A673 (cell line): ENCODE measurements at regions of chr12 and their contacts with region 1.

Region 1: DNA sequence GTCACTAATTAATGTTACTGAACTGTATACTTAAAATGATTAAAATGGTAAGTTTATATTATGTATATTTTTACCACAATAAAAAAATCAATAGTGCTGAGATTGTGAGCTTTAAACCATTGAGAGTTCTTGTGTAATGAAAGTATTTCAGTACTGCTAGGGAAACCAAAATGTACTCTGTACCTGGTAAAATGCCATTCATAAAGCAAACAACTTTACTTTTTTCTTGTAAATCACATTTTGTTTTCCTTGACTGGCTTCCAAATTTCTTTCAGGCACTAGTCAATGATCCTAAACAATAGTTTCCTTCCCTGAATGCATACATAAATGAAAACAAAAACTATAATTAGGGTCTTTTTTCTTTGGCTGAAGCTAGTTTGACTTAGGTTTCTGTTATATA is 29.4 kb upstream of the SNRPF start:
- DNase-seq: no peak
- H3K4me3 ChIP-seq: peak overlapping the region; percentile 50
- H3K27ac ChIP-seq: peak overlapping the region; percentile 89
- H3K4me1 ChIP-seq: peaks cover 30% of the 10 kb centered on the region
- H3K27me3 ChIP-seq: no peaks in the 10 kb centered on the region
- CTCF ChIP-seq: no peak

Region 2: DNA sequence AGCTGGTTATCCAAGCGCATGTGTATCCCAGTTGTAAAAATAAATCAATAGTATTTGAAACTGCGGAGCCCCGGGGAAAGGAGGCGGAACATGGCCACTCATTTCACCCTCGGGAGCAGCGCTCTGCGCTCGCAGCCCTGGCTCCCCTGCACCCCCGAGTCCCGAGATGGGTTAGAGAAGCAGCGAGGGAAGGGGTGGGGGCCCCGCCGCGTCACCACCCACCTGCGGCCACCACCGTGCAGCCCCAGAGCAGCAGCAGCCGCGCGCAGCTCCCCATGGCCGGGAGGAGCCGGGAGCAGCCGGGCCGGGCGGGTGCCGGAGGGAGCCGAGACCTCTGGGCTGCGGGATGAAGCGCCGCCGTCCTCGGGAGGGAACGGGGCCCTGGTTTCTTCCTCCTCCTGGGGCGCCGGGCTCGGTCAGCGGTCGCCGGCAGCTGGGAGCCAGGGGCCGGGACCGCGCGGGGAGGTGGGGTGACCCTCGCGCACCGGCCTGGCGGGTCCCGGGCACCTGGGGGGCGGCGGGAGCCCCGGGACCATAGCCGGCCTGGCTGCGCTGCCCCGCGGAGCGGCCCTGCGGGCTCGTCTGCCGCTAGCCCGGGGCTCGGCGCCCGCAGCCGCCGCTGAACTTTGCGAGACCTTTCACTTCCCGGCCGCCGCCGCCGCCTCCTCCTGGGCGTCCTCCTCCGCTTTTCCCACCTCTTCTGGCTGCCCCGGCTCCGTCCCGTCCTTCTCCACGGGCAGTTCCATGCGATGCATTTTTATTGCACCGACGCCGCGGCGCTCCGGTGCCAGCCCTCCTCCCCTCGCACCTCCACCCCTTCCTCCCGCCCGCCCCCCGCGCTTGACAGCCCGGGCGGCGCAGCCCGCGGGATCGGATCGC is 39.1 kb before region 1 on chr12 and contains the start of gene NTN4:
- CTCF ChIA-PET with region 1: no interaction called
- POLR2A ChIA-PET with region 1: no interaction called
- intact Hi-C with region 1: loop called (anchors 1 kb)
- DNase-seq: peak; percentile 15
- H3K4me3 ChIP-seq: peak within 1 kb of the TSS; percentile 54
- H3K27ac ChIP-seq: no peak within 1 kb of the TSS
- H3K4me1 ChIP-seq: peaks cover 5% of the 10 kb centered on the region
- H3K27me3 ChIP-seq: peaks cover 16% of the 10 kb centered on the region
- CTCF ChIP-seq: no peak
- total RNA-seq, gene NTN4: 9.6 and 11.7 TPM in 2 replicates

Region 3: GRCh38 chr12:96194971-96195844 is 365.8 kb after region 1 on chr12:
- CTCF ChIA-PET with region 1: no interaction called
- POLR2A ChIA-PET with region 1: no interaction called
- intact Hi-C with region 1: loop called (anchors 5 kb)
- DNase-seq: peak; percentile 94
- H3K4me3 ChIP-seq: peak overlapping the region; percentile 92
- H3K27ac ChIP-seq: peak overlapping the region; percentile 97
- H3K4me1 ChIP-seq: peaks cover 44% of the 10 kb centered on the region
- H3K27me3 ChIP-seq: no peaks in the 10 kb centered on the region
- CTCF ChIP-seq: no peak